CD8-positive, alpha-beta T cell (primary cell): ENCODE measurements at regions of chr14 and their contacts with region 1.

Region 1: GRCh38 chr14:30621940-30622830 is at the start of gene SCFD1:
- DNase-seq: peak; percentile 79 to 96 (median 92)
- ATAC-seq: peak; percentile 98
- H3K4me3 ChIP-seq: peak within 1 kb of the TSS; percentile 80 to 87
- H3K4me3 Mint-ChIP-seq: peak within 1 kb of the TSS; percentile 94
- H3K27ac ChIP-seq: peak within 1 kb of the TSS; percentile 85 to 88
- H3K27ac Mint-ChIP-seq: peak within 1 kb of the TSS; percentile 96
- H3K4me1 ChIP-seq: peaks cover 30% of the 10 kb centered on the region
- H3K4me1 Mint-ChIP-seq: peaks cover 51% of the 10 kb centered on the region
- H3K27me3 ChIP-seq: no peaks in the 10 kb centered on the region
- H3K27me3 Mint-ChIP-seq: no peaks in the 10 kb centered on the region
- CTCF ChIP-seq: no peak
- total RNA-seq, gene SCFD1: 66.5 to 71.5 TPM

Region 2: GRCh38 chr14:30656190-30656632 is 34.0 kb after region 1 on chr14:
- CTCF ChIA-PET with region 1: interaction called, 3 read pairs
- POLR2A ChIA-PET with region 1: interaction called, 3 read pairs
- intact Hi-C with region 1: loop called in 1 of 2 experiments (anchors 2 kb)
- DNase-seq: peak in 7 of 9 experiments; percentile 1 to 65 (median 24)
- ATAC-seq: peak; percentile 83
- H3K4me3 ChIP-seq: no peak overlapping the region
- H3K4me3 Mint-ChIP-seq: no peak overlapping the region
- H3K27ac ChIP-seq: no peak overlapping the region
- H3K27ac Mint-ChIP-seq: no peak overlapping the region
- H3K4me1 ChIP-seq: no peaks in the 10 kb centered on the region
- H3K4me1 Mint-ChIP-seq: no peaks in the 10 kb centered on the region
- H3K27me3 ChIP-seq: no peaks in the 10 kb centered on the region
- H3K27me3 Mint-ChIP-seq: no peaks in the 10 kb centered on the region
- CTCF ChIP-seq: peak; percentile 70

Region 3: DNA sequence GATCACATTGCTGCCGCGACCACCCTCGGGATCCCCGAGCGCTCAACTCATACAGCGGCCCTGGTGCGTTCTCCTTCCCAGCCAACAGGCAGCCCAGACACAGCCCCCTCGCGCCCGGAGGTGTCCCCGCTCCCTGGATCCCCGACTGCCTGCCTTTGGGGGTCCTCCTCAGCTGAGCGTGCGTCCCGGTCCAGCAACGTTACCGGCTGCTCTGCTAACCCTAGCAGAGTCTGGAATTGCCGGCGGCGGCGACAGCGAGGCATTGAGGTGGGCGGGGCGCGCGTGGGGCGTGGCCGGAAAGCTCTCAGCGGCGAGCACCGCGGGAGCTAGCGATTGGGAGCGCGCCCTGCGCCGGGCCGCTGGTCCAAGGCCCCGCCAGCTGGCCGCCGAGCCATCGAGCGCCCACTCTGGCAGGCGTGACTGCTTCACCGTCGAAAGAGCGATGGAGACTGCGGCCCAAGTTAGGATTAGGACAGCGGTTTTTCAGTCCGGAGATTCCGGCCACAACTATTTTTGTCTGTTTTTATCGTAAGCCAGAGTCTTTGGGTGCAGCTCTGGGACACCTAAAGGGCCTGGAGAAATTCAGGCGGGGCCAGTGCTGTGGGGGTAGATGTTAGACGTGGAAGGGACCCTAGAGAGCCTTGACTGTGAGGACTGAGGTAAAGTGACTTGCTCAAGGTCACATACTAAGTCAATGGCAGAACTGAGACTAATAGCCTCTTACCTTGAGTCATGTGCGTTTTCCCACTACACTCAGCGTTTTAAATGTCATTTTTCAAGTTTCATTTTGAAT is 798.3 kb after region 1 on chr14 and contains the start of gene HEATR5A:
- CTCF ChIA-PET with region 1: no interaction called
- POLR2A ChIA-PET with region 1: interaction called, 4 read pairs
- intact Hi-C with region 1: loop called in 1 of 2 experiments (anchors 1 kb)
- DNase-seq: peak; percentile 87 to 95 (median 93)
- ATAC-seq: peak; percentile 97
- H3K4me3 ChIP-seq: peak within 1 kb of the TSS; percentile 76 to 96
- H3K4me3 Mint-ChIP-seq: peak within 1 kb of the TSS; percentile 97
- H3K27ac ChIP-seq: peak within 1 kb of the TSS; percentile 63 to 71
- H3K27ac Mint-ChIP-seq: peak within 1 kb of the TSS; percentile 91
- H3K4me1 ChIP-seq: peaks cover 13% of the 10 kb centered on the region
- H3K4me1 Mint-ChIP-seq: peaks cover 25% of the 10 kb centered on the region
- H3K27me3 ChIP-seq: no peaks in the 10 kb centered on the region
- H3K27me3 Mint-ChIP-seq: no peaks in the 10 kb centered on the region
- CTCF ChIP-seq: no peak
- total RNA-seq, gene HEATR5A: 3.4 to 3.5 TPM

Region 4: DNA sequence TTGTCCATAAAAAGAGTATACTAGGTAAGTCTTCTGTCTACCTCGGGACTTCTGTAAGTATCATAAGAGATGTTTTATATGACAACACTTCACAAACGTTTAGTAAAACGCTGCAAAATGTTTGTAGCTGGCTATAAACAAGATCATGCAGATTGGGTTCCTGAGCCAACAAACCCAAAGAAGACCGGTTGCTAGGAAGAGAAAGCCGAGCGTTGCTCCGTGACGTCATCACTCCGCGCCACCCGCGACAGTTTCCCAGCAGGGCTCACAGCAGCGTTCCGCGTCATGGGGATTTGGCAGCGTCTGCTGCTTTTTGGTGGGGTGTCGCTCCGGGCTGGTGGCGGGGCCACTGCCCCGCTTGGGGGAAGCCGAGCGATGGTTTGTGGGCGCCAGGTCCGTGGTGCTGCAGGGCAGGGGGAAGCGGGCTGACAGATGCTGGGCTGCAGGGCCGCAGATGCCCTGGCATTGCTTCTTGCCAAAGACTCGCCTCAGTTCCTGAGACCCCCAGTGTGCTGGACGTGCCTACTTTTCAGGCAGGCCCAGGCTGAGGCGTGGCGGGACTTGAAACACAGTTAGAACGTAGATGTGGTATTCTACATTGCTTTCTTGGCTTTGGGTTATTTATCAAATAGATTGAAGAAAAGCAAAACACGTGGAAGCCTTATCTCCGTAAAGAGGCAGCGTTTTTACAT is 939.1 kb after region 1 on chr14 and contains the start of gene NUBPL:
- CTCF ChIA-PET with region 1: no interaction called
- POLR2A ChIA-PET with region 1: no interaction called
- intact Hi-C with region 1: loop called in 1 of 2 experiments (anchors 10 kb)
- DNase-seq: peak; percentile 95 to 99 (median 98)
- ATAC-seq: peak; percentile 95
- H3K4me3 ChIP-seq: peak within 1 kb of the TSS; percentile 75 to 86
- H3K4me3 Mint-ChIP-seq: peak within 1 kb of the TSS; percentile 96
- H3K27ac ChIP-seq: peak within 1 kb of the TSS; percentile 82 to 86
- H3K27ac Mint-ChIP-seq: peak within 1 kb of the TSS; percentile 98
- H3K4me1 ChIP-seq: peaks cover 18% of the 10 kb centered on the region
- H3K4me1 Mint-ChIP-seq: peaks cover 35% of the 10 kb centered on the region
- H3K27me3 ChIP-seq: no peaks in the 10 kb centered on the region
- H3K27me3 Mint-ChIP-seq: peaks cover 4% of the 10 kb centered on the region
- CTCF ChIP-seq: no peak
- total RNA-seq, gene NUBPL: 4.7 to 7.5 TPM